WTC11 (cell line): ENCODE measurements at regions of chr20 and their contacts with region 1.

Region 1: GRCh38 chr20:21702553-21703470 is 2.7 kb upstream of the PAX1 start:
- DNase-seq: peak; percentile 95
- ATAC-seq: peak; percentile 71
- H3K4me3 Mint-ChIP-seq: peak overlapping the region; percentile 57
- H3K27ac Mint-ChIP-seq: no peak overlapping the region
- H3K4me1 Mint-ChIP-seq: peaks cover 70% of the 10 kb centered on the region
- H3K27me3 Mint-ChIP-seq: peaks cover 98% of the 10 kb centered on the region
- CTCF ChIP-seq: peak; percentile 68; the same call in 1 of the 2 replicates

Region 2: DNA sequence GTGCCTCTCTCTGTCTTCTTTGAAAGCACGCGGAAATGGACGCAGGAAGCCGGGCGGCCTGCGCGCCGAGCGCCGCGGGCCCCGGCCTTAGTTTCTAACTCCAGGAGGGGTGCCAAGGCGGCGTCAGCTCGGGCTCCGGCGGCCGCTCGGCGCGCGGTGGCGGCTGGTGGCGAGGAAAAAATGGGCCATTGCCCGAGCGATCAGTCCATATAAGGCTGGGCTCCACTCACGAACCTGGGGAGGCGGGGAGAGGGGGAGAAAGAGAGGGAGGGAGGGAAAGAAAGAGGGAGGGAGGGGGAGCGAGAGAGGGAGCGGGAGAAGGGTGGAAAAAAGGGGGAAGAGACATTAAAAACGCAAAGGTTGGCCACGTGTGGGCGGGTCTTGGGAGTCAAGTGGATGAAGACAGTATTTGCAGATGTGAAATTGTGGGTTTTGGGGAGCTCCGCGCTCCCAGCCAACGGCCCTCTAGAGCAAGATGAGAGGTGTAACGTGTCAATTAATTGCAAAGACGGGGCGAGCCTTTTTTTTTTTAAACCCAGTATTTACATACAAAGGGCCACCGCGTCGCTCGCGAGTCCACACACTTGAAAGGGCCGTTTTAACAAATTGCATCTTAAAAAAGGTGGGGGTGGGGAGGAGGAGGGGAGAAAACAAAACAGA is 188.8 kb before region 1 on chr20 and contains the start of gene NKX2-2:
- CTCF ChIA-PET with region 1: interaction called, 27 read pairs
- POLR2A ChIA-PET with region 1: interaction called, 3 read pairs
- DNase-seq: peak; percentile 54
- ATAC-seq: no peak
- H3K4me3 Mint-ChIP-seq: peak within 1 kb of the TSS; percentile 68
- H3K27ac Mint-ChIP-seq: no peak within 1 kb of the TSS
- H3K4me1 Mint-ChIP-seq: peaks cover 53% of the 10 kb centered on the region
- H3K27me3 Mint-ChIP-seq: peaks cover 93% of the 10 kb centered on the region
- CTCF ChIP-seq: no peak
- total RNA-seq, gene NKX2-2: not detected in 3 replicates

Region 3: DNA sequence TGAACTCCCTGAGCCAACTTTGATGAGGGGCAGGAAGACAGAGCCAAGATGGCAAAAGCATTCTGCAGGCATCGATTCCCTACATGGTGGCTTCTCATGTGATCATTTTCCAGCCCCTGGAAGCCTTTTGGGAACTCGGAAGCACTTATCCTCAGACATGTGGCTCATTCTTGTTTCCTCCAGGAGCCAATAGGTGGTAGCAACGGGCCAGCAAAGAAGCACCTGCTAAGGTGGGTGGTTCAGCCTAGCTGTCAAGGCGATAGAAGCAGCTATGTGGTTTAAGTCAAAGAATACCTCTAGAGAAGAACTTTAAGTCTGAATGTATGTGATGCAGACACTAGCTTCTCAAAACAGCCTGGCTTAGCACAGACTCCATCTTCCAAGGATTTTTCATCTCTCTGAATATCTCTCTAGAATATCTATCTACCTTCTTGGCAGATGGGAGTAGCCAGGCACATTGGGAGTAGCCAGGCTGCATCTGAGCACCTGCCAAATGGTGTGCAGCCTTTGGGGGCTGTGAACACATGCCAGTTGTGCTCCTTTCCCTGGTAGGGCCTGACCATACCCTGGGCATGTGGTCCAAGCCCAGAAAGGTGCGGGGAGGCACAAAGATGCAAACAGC is 62.1 kb before region 1 on chr20:
- CTCF ChIA-PET with region 1: interaction called, 33 read pairs
- POLR2A ChIA-PET with region 1: no interaction called
- DNase-seq: peak; percentile 68
- ATAC-seq: peak; percentile 99
- H3K4me3 Mint-ChIP-seq: no peak overlapping the region
- H3K27ac Mint-ChIP-seq: no peak overlapping the region
- H3K4me1 Mint-ChIP-seq: no peaks in the 10 kb centered on the region
- H3K27me3 Mint-ChIP-seq: peaks cover 3% of the 10 kb centered on the region; the same call in 1 of the 2 replicates
- CTCF ChIP-seq: peak; percentile 30; the same call in 1 of the 2 replicates

Region 4: GRCh38 chr20:21714297-21715192 is 11.7 kb after region 1 on chr20:
- CTCF ChIA-PET with region 1: interaction called, 131 read pairs
- POLR2A ChIA-PET with region 1: interaction called, 3 read pairs
- DNase-seq: peak; percentile 58
- ATAC-seq: peak; percentile 57
- H3K4me3 Mint-ChIP-seq: peak overlapping the region; percentile 71
- H3K27ac Mint-ChIP-seq: no peak overlapping the region
- H3K4me1 Mint-ChIP-seq: peaks cover 48% of the 10 kb centered on the region
- H3K27me3 Mint-ChIP-seq: peaks cover 100% of the 10 kb centered on the region
- CTCF ChIP-seq: no peak